A549 (cell line): ENCODE measurements at regions of chr15 and their contacts with region 1.

Region 1: GRCh38 chr15:99104788-99105513 is at the start of gene SYNM:
- DNase-seq: peak; percentile 93 to 94
- ATAC-seq: peak; percentile 83 to 91
- H3K4me3 ChIP-seq: peak within 1 kb of the TSS; percentile 64
- H3K27ac ChIP-seq: peak within 1 kb of the TSS; percentile 77 to 92
- H3K4me1 ChIP-seq: peaks cover 20% of the 10 kb centered on the region
- CTCF ChIP-seq: peak; percentile 99
- EP300 ChIP-seq: no peak
- POLR2A ChIP-seq: peak; percentile 100
- RAD21 ChIP-seq: peak; percentile 76 to 97
- polyA plus RNA-seq, gene SYNM: 22.6 and 23.7 TPM in 2 replicates

Region 2: DNA sequence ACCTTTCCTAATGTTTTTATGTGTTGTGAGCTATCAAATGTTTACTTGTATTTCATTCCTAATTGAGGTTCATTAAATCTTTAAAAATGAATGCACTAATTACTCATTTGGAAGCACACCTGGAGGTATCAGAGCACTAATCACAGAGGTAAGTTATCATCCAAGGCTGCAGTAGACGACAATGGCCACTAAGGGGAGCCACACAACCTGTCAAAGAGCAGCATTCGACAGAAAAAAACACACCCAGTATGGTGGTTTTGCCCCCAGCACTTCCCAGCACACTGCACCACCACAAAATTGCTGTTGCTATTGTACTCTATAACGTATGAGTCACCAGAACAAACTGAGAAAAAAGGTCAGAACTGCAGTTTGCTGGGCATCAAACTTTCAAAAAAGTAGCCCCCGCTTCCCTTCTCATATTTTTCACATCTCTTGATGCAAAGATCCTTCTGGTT is 662.5 kb before region 1 on chr15:
- CTCF ChIA-PET with region 1: interaction called, 12 read pairs
- POLR2A ChIA-PET with region 1: no interaction called
- DNase-seq: peak; percentile 80 to 86
- ATAC-seq: peak; percentile 57 to 86
- H3K4me3 ChIP-seq: no peak overlapping the region
- H3K27ac ChIP-seq: no peak overlapping the region
- H3K4me1 ChIP-seq: peaks cover 8% of the 10 kb centered on the region
- CTCF ChIP-seq: peak; percentile 97
- EP300 ChIP-seq: no peak
- POLR2A ChIP-seq: no peak
- RAD21 ChIP-seq: peak; percentile 97 to 98

Region 3: DNA sequence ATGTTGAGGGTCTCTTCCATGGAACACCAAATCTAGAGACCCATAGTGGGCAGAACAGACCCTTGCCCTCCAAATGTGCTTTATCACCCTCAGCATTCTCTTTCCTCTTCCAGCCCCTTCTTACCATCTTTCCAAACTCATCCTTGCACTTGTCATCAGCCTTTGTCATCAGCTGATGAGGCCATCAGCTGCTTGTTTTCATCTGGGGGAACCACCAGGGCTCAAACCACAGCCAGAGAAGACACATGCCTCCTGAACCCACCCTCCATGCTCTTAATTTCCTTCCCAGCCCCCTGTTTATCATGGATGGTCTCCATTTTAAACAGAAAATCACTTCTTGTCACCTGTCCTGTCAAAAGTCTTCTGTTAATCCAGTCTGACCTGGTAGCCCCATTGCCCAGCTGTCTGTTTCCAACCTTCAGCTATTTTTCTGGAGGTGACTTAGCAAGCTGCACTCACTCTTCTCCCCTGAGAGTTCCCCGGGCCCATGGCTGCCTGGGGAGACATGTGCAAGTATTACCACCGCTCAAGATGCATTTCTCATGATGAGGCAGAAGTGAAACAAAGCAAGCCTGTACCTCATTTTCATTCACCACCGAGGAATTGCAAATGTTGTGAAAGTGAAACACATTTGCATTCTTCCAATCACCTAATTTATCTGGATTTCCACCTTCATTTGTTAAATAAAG is 14.8 kb before region 1 on chr15:
- CTCF ChIA-PET with region 1: interaction called, 81 read pairs
- POLR2A ChIA-PET with region 1: no interaction called
- DNase-seq: no peak
- ATAC-seq: no peak
- H3K4me3 ChIP-seq: no peak overlapping the region
- H3K27ac ChIP-seq: no peak overlapping the region
- H3K4me1 ChIP-seq: no peaks in the 10 kb centered on the region
- CTCF ChIP-seq: no peak
- EP300 ChIP-seq: no peak
- POLR2A ChIP-seq: no peak
- RAD21 ChIP-seq: no peak

Region 4: DNA sequence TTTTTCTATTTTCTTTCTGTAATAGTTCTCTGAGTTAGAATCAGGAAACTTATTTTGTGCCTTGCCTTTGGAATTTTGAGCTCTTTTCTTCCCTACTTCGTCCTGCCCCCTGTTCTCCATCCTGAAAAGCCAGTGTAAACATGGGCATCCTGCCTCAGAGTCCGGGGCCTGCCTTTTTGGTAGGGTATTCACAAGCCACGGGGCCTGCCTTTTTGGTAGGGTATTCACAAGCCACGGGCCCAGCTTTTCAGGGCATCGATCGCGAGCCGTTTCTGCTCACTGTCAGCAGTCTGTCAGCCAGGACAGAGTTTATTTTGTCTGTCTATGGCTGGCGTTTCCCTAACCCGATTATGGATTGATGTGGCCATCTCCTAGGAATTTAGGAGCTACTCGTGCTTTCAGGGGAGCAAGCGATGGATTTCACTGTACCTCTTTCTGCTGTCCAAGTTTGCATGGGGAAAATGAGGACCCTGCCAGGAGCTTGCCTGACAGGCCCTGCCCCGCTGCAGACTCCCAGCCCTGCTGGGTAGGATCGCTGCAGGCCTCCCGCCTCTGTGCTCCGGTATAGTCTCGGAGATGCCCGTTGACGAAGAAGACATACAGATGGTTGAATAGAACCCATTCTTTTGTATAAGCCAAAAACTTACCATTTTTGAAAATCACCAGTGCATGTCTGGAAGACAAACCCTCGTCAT is 12.8 kb after region 1 on chr15:
- CTCF ChIA-PET with region 1: interaction called, 326 read pairs
- POLR2A ChIA-PET with region 1: interaction called, 4 read pairs
- DNase-seq: no peak
- ATAC-seq: no peak
- H3K4me3 ChIP-seq: no peak overlapping the region
- H3K27ac ChIP-seq: no peak overlapping the region
- H3K4me1 ChIP-seq: peaks cover 9% of the 10 kb centered on the region
- CTCF ChIP-seq: no peak
- EP300 ChIP-seq: no peak
- POLR2A ChIP-seq: no peak
- RAD21 ChIP-seq: no peak

Region 5: GRCh38 chr15:99123706-99124451 is 18.9 kb after region 1 on chr15:
- CTCF ChIA-PET with region 1: interaction called, 326 read pairs
- POLR2A ChIA-PET with region 1: interaction called, 17 read pairs
- DNase-seq: peak; percentile 92 to 94
- ATAC-seq: peak; percentile 86 to 93
- H3K4me3 ChIP-seq: peak overlapping the region; percentile 33
- H3K27ac ChIP-seq: peak overlapping the region; percentile 91 to 96
- H3K4me1 ChIP-seq: peaks cover 33% of the 10 kb centered on the region
- CTCF ChIP-seq: no peak
- EP300 ChIP-seq: peak; percentile 37 to 63; a peak in 3 of 5 replicates
- POLR2A ChIP-seq: no peak
- RAD21 ChIP-seq: peak; percentile 18 to 43; a peak in 2 of 5 replicates

Region 6: DNA sequence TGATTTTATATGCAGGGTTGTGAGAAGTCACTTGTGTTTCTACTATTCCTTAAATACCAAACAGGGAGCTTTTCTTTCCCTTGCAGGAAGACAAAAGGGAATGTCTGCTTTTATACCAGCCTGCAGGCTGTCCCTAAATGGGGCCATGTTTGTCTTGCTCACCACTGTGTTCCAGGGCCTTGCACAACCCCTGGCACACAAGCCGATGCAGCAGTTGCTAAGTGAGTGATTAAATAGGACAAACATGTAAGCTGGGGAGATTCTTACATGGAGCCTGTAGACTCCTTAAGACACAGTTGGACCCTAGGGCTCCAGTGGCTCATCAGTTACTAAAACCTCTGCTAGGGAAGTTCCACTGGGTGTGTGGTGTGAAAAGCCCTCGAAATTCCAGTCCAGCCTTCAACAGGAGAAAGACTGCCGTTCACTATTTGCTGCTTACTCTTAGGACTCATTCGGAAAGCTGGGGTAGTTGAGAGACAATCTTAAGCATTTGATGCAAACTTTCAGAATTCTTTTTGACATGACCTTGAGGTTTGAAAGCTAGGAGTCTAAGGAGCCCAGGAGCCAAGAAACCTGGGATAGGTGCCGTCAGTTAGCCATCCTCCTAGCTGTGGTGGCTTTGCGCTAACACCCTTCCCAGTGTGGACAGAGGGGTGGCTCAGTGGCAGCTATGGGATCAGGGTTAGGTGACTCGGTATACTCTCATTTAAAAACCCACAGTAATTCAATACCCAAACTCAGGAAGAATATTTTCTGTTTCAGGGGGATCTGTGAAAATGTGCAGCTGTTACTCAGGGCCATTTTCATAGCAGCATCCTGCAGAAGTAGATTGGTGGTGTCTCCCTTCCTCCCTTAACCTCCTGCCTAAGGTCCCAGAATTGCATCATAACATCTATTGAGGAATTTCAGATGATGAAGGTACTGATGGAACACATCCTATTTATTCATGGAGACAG is 39.0 kb after region 1 on chr15:
- CTCF ChIA-PET with region 1: interaction called, 18 read pairs
- POLR2A ChIA-PET with region 1: no interaction called
- DNase-seq: no peak
- ATAC-seq: peak; percentile 12 to 15; a peak in 4 of 6 replicates
- H3K4me3 ChIP-seq: no peak overlapping the region
- H3K27ac ChIP-seq: no peak overlapping the region
- H3K4me1 ChIP-seq: no peaks in the 10 kb centered on the region
- CTCF ChIP-seq: no peak
- EP300 ChIP-seq: no peak
- POLR2A ChIP-seq: no peak
- RAD21 ChIP-seq: no peak

Region 7: GRCh38 chr15:99174567-99175395 is 69.8 kb after region 1 on chr15:
- CTCF ChIA-PET with region 1: interaction called, 17 read pairs
- POLR2A ChIA-PET with region 1: no interaction called
- DNase-seq: no peak
- ATAC-seq: no peak
- H3K4me3 ChIP-seq: no peak overlapping the region
- H3K27ac ChIP-seq: no peak overlapping the region
- H3K4me1 ChIP-seq: no peaks in the 10 kb centered on the region
- CTCF ChIP-seq: no peak
- EP300 ChIP-seq: no peak
- POLR2A ChIP-seq: no peak
- RAD21 ChIP-seq: no peak